Activated CD8-positive, alpha-beta T cell treated with anti-CD3 and anti-CD28 coated beads, Interleukin-2, amount 10 ng/mL, durations not matched to agents 7 days and 5 days (primary cell): ENCODE measurements at regions of chr6 and their contacts with region 1.

Region 1: GRCh38 chr6:35342258-35343091 is at the start of gene PPARD:
- DNase-seq: peak; percentile 98
- ATAC-seq: peak; percentile 99
- H3K4me3 Mint-ChIP-seq: peak within 1 kb of the TSS; percentile 90
- H3K27ac Mint-ChIP-seq: peak within 1 kb of the TSS; percentile 92
- H3K4me1 Mint-ChIP-seq: peaks cover 51% of the 10 kb centered on the region
- H3K27me3 Mint-ChIP-seq: peaks cover 4% of the 10 kb centered on the region
- total RNA-seq, gene PPARD: 36.3 to 36.7 TPM

Region 2: DNA sequence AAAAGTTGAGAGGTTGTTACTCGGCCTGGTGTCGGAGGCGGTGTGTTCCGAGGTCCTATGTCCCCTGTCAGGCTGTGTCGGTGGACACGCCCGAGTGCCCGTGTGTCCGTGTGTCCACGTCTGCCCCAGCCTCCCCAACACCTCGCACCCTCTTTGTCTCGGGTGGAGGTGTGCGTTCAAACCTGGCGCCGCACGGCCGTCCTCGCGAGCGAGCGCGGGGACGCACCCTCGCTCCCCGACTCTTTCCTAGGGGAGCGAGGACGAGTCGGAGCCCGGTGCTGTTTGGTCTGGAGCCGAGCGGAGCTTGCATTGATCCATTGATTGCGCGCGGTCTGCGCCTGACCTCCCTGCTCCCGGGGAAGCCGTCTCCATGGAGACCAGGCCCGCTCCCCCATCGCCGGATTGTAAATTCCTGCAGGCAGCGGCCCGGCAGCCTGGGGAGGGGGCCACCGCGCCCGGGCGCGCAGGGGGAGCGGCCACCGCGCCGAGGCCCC is 129.1 kb before region 1 on chr6:
- CTCF ChIA-PET with region 1: no interaction called
- POLR2A ChIA-PET with region 1: no interaction called
- DNase-seq: no peak
- ATAC-seq: no peak
- H3K4me3 Mint-ChIP-seq: peak overlapping the region; percentile 44
- H3K27ac Mint-ChIP-seq: no peak overlapping the region
- H3K4me1 Mint-ChIP-seq: peaks cover 6% of the 10 kb centered on the region
- H3K27me3 Mint-ChIP-seq: peaks cover 69% of the 10 kb centered on the region

Region 3: GRCh38 chr6:35368038-35368887 is 25.8 kb after region 1 on chr6:
- CTCF ChIA-PET with region 1: interaction called, 10 read pairs
- POLR2A ChIA-PET with region 1: no interaction called
- DNase-seq: peak; percentile 34
- ATAC-seq: peak; percentile 56
- H3K4me3 Mint-ChIP-seq: no peak overlapping the region
- H3K27ac Mint-ChIP-seq: peak overlapping the region; percentile 61
- H3K4me1 Mint-ChIP-seq: peaks cover 63% of the 10 kb centered on the region
- H3K27me3 Mint-ChIP-seq: no peaks in the 10 kb centered on the region

Region 4: DNA sequence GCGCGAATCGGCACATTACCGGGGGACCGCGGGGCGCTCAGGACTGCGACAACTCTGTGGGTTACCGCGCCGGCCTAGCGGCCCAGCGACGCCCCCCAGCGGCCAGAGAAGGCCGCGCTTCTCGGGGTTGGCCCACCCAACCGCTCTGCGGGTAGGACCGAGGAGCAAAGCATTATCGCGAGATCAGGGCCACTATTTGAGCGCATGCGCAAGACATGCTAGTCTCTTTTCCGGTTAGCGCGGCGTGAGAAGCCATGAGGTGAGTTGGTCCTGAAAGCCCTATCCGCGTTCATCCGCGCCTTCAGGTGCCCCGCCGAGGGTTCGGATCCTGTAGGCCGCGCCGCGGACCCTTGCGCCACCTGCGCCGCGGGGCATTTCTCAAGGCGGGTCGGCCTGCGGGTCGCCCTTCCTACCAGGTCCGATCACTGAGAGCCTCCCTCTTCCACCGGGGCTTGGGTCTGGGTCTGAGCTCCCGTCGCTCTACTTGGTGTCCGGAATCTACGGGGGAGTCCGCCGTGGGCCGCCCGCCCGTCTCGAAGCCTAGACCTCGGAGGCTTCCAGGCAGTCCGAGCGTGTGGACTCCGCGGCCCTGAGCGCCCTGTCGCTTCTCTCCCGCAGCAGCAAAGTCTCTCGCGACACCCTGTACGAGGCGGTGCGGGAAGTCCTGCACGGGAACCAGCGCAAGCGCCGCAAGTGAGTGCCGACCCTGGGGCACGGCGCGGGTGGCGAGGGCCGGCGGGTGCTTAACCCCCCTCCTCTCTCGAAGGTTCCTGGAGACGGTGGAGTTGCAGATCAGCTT is 125.9 kb after region 1 on chr6 and contains the start of gene RPL10A:
- CTCF ChIA-PET with region 1: interaction called, 19 read pairs
- POLR2A ChIA-PET with region 1: interaction called, 7 read pairs
- DNase-seq: peak; percentile 98
- ATAC-seq: peak; percentile 89
- H3K4me3 Mint-ChIP-seq: peak within 1 kb of the TSS; percentile 83
- H3K27ac Mint-ChIP-seq: peak within 1 kb of the TSS; percentile 99
- H3K4me1 Mint-ChIP-seq: peaks cover 39% of the 10 kb centered on the region
- H3K27me3 Mint-ChIP-seq: no peaks in the 10 kb centered on the region
- total RNA-seq, gene RPL10A: 1,398 to 1,443 TPM